Tibial artery (tissue), 4 donors: ENCODE measurements at regions of chrX and their contacts with region 1.

Region 1: DNA sequence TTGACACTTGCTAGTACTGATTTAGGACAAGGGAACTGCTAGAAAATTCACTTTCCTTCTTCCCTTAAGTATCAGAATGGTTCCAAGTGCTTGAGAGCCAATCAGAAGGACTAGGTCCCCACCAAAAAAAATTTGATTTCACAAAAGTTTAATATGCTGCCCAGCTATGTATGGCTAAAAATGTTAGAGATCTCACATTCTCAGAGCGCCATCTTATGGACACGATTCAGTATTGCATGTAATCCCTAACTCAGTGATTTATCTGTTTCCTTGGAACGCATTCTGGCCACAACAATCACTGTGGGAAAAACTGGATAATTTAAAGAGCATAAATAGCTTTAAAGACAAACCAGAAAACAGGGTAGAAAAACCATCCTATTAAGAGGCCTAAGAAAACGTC is 255.1 kb upstream of the GPC4 start:
- DNase-seq: no peak
- H3K4me3 ChIP-seq: no peak overlapping the region
- H3K27ac ChIP-seq: no peak overlapping the region
- H3K4me1 ChIP-seq: peaks cover 0 to 3% (median 0%) of the 10 kb centered on the region in 4 donors
- H3K27me3 ChIP-seq: no peaks in the 10 kb centered on the region
- CTCF ChIP-seq: peak; percentile 63 to 73

Region 2: GRCh38 chrX:131821945-131822622 is 1848.3 kb before region 1 on chrX:
- intact Hi-C with region 1: loop called (anchors 5 kb)
- DNase-seq: no peak
- H3K4me3 ChIP-seq: no peak overlapping the region
- H3K27ac ChIP-seq: no peak overlapping the region
- H3K4me1 ChIP-seq: no peaks in the 10 kb centered on the region
- H3K27me3 ChIP-seq: no peaks in the 10 kb centered on the region
- CTCF ChIP-seq: no peak

Region 3: GRCh38 chrX:133335027-133335426 is 335.4 kb before region 1 on chrX:
- intact Hi-C with region 1: loop called (anchors 10 kb)
- DNase-seq: no peak
- H3K4me3 ChIP-seq: no peak overlapping the region
- H3K27ac ChIP-seq: no peak overlapping the region
- H3K4me1 ChIP-seq: peaks cover 0 to 64% (median 0%) of the 10 kb centered on the region in 4 donors
- H3K27me3 ChIP-seq: no peaks in the 10 kb centered on the region
- CTCF ChIP-seq: peak; percentile 39 to 45

Region 4: GRCh38 chrX:133555782-133556458 is 114.5 kb before region 1 on chrX:
- intact Hi-C with region 1: no loop called
- DNase-seq: no peak
- H3K4me3 ChIP-seq: no peak overlapping the region
- H3K27ac ChIP-seq: no peak overlapping the region
- H3K4me1 ChIP-seq: peaks cover 0 to 2% (median 0%) of the 10 kb centered on the region in 4 donors
- H3K27me3 ChIP-seq: no peaks in the 10 kb centered on the region
- CTCF ChIP-seq: no peak

Region 5: GRCh38 chrX:133697656-133698055 is 27.3 kb after region 1 on chrX:
- intact Hi-C with region 1: no loop called
- DNase-seq: no peak
- H3K4me3 ChIP-seq: no peak overlapping the region
- H3K27ac ChIP-seq: no peak overlapping the region
- H3K4me1 ChIP-seq: no peaks in the 10 kb centered on the region
- H3K27me3 ChIP-seq: no peaks in the 10 kb centered on the region
- CTCF ChIP-seq: no peak